ENCODE measurements at regions of chr20 and their contacts with region 1.

Region 1: GRCh38 chr20:45823949-45824835 is 2.9 kb downstream of the TNNC2 start:
- DNase-seq: peak; percentile 65
- H3K4me3 ChIP-seq: no peak overlapping the region
- H3K27ac ChIP-seq: no peak overlapping the region
- H3K4me1 ChIP-seq: peaks cover 11% of the 10 kb centered on the region
- H3K27me3 ChIP-seq: no peaks in the 10 kb centered on the region

Region 2: GRCh38 chr20:45592574-45593189 is 231.5 kb before region 1 on chr20:
- in situ Hi-C with region 1: no loop called
- DNase-seq: peak; percentile 62
- H3K4me3 ChIP-seq: no peak overlapping the region
- H3K27ac ChIP-seq: no peak overlapping the region
- H3K4me1 ChIP-seq: peaks cover 4% of the 10 kb centered on the region; the same call in 1 of the 2 replicates
- H3K27me3 ChIP-seq: no peaks in the 10 kb centered on the region; the same call in 1 of the 2 replicates

Region 3: DNA sequence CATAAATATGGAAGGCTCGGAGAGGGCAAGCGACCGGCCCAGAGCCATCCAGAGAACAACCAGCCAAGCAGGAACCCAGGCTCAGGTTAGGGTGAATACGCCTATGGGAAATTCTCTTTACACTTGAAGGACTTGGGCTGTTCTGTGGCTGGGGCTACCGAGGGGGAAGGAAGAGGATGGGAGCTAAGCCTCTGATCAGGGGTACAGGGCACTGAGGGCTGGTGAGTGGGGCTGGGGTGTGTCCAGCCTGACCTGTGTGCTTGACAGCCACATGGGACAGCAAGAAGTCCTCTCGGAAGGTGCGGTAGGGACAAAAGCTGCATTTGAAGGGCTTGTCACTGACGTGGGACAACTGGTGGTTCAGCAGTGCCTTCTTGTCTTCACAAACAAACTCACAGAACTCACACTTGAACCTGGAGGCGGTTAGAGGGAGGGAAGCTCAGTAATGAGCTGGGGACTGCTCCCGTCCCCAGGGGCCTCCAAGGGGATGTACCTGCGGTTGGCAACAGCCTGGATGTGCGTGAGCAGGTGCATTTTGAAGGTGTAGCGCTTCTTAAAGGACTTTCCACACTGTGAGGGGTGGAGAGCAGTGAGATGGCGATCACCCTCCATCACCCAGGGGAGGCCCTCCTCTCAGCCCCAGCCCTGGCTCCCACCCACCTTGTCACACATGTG is 135.9 kb after region 1 on chr20:
- in situ Hi-C with region 1: loop called (anchors 10 kb)
- DNase-seq: no peak
- H3K4me3 ChIP-seq: no peak overlapping the region
- H3K27ac ChIP-seq: no peak overlapping the region
- H3K4me1 ChIP-seq: no peaks in the 10 kb centered on the region
- H3K27me3 ChIP-seq: no peaks in the 10 kb centered on the region

Measured in GM23248 (cell line).